ENCODE measurements at regions of chr10 and their contacts with region 1.

Region 1: GRCh38 chr10:95841661-95842498 is 65.9 kb upstream of the CC2D2B start:
- DNase-seq: no peak
- ATAC-seq: peak; percentile 53
- H3K4me3 ChIP-seq: no peak overlapping the region
- H3K27ac ChIP-seq: peak overlapping the region; percentile 98
- H3K4me1 ChIP-seq: peaks cover 43% of the 10 kb centered on the region
- H3K27me3 ChIP-seq: no peaks in the 10 kb centered on the region
- CTCF ChIP-seq: peak; percentile 37 to 71 (median 58); a peak in 4 of 6 replicates
- EP300 ChIP-seq: peak in 1 of 2 experiments; percentile 45; a peak in 1 of 4 replicates
- POLR2A ChIP-seq: no peak
- RAD21 ChIP-seq: peak; percentile 77

Region 2: DNA sequence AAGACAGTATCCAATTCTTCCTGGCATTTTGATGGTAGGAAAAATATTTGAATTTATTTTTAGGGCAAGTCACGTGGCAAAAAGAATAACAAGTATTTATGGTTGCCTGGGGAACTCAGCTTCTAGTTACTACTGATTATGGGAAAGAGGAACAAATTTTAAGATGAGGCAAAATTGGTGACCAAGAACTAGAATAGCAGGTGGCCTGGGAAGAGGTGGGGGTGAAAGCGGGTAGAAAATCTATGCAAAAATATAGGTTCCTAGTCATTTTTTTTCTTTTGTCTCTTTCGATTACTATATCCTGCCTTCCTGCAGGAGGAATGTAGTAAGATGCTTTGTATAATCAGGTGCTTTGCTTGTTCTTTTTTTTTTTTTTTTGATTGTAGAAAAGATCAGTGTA is 58.1 kb before region 1 on chr10:
- CTCF ChIA-PET with region 1: interaction called, 99 read pairs
- POLR2A ChIA-PET with region 1: interaction called, 451 read pairs
- RAD21 ChIA-PET with region 1: interaction called, 268 read pairs
- SMC1A ChIA-PET with region 1: interaction called, 795 read pairs
- in situ Hi-C with region 1: no loop called
- intact Hi-C with region 1: no loop called
- DNase-seq: peak; percentile 94
- ATAC-seq: peak; percentile 50
- H3K4me3 ChIP-seq: no peak overlapping the region
- H3K27ac ChIP-seq: peak overlapping the region; percentile 99
- H3K4me1 ChIP-seq: peaks cover 79% of the 10 kb centered on the region
- H3K27me3 ChIP-seq: no peaks in the 10 kb centered on the region
- CTCF ChIP-seq: no peak
- EP300 ChIP-seq: peak; percentile 93 to 99
- POLR2A ChIP-seq: no peak
- RAD21 ChIP-seq: peak; percentile 8; the same call in 1 of the 2 replicates

Region 3: DNA sequence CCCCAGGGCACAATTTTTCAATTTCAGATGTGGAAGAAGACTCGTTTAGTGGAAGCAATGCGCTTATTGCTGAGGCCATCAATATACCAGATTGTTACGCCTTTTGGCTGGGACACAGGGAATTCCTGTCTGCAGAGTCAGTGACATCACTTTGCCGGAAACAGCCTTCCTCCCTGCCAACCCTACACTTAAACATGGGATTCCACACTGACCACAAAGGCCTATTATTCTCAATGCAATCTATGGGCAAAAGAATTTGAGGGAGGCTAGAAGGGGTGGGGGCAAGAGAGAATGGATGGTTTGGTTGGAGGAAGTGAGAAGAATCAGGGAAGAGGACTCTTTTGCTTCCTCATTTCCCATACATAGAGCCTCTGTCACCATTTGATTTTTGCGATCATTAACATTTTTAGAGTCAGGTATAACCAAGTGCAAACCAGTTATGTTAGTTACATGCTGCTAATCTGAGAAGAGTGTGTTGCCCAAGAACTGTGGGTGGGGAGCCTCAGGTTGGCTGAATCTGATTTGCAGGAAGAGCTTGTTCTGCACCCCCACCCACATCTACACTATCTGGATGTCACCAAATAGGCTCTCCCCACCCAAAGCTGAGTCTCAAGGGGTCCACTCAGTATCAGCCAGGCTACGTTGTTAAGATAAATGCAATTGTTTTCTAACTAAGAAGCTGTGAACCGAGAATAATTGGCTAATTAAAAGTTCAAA is 27.7 kb before region 1 on chr10:
- CTCF ChIA-PET with region 1: interaction called, 32 read pairs
- POLR2A ChIA-PET with region 1: interaction called, 176 read pairs
- RAD21 ChIA-PET with region 1: interaction called, 260 read pairs
- SMC1A ChIA-PET with region 1: interaction called, 359 read pairs
- in situ Hi-C with region 1: no loop called
- intact Hi-C with region 1: no loop called
- DNase-seq: no peak
- ATAC-seq: peak; percentile 6; the same call in 1 of the 3 replicates
- H3K4me3 ChIP-seq: no peak overlapping the region
- H3K27ac ChIP-seq: peak overlapping the region; percentile 26; the same call in 1 of the 2 replicates
- H3K4me1 ChIP-seq: peaks cover 44% of the 10 kb centered on the region
- H3K27me3 ChIP-seq: no peaks in the 10 kb centered on the region
- CTCF ChIP-seq: no peak
- EP300 ChIP-seq: no peak
- POLR2A ChIP-seq: peak; percentile 30; the same call in 1 of the 2 replicates
- RAD21 ChIP-seq: no peak

Region 4: GRCh38 chr10:95864906-95865813 is 23.3 kb after region 1 on chr10:
- CTCF ChIA-PET with region 1: interaction called, 40 read pairs
- POLR2A ChIA-PET with region 1: interaction called, 3 read pairs
- RAD21 ChIA-PET with region 1: interaction called, 14 read pairs
- SMC1A ChIA-PET with region 1: interaction called, 30 read pairs
- in situ Hi-C with region 1: no loop called
- intact Hi-C with region 1: no loop called
- DNase-seq: peak; percentile 42
- ATAC-seq: peak; percentile 91
- H3K4me3 ChIP-seq: no peak overlapping the region
- H3K27ac ChIP-seq: peak overlapping the region; percentile 40; the same call in 1 of the 2 replicates
- H3K4me1 ChIP-seq: peaks cover 9% of the 10 kb centered on the region; the same call in 1 of the 2 replicates
- H3K27me3 ChIP-seq: no peaks in the 10 kb centered on the region
- CTCF ChIP-seq: peak; percentile 66 to 77 (median 70); a peak in 5 of 6 replicates
- EP300 ChIP-seq: no peak
- POLR2A ChIP-seq: no peak
- RAD21 ChIP-seq: peak; percentile 80

Measured in GM12878 (cell line).